ENCODE measurements at regions of chr22 and their contacts with region 1.

Region 1: GRCh38 chr22:22349455-22349836 is 104.9 kb downstream of the VPREB1 start:
- DNase-seq: no peak
- H3K4me3 ChIP-seq: no peak overlapping the region
- H3K27ac ChIP-seq: no peak overlapping the region
- H3K4me1 ChIP-seq: peaks cover 40% of the 10 kb centered on the region
- CTCF ChIP-seq: no peak

Region 2: GRCh38 chr22:22397277-22397870 is 47.9 kb after region 1 on chr22:
- CTCF ChIA-PET with region 1: interaction called, 4 read pairs
- POLR2A ChIA-PET with region 1: interaction called, 4 read pairs
- intact Hi-C with region 1: loop called (anchors 1 kb)
- DNase-seq: peak; percentile 34
- H3K4me3 ChIP-seq: no peak overlapping the region
- H3K27ac ChIP-seq: no peak overlapping the region
- H3K4me1 ChIP-seq: peaks cover 71% of the 10 kb centered on the region
- CTCF ChIP-seq: peak; percentile 54